ENCODE measurements at regions of chr19 and their contacts with region 1.

Region 1: GRCh38 chr19:47713046-47714021 is at the start of gene EHD2:
- DNase-seq: peak; percentile 80
- ATAC-seq: peak; percentile 94 to 96
- total RNA-seq, gene EHD2: 91.1 to 98.8 TPM

Region 2: GRCh38 chr19:47742634-47743033 is 29.3 kb after region 1 on chr19:
- intact Hi-C with region 1: loop called in 1 of 2 experiments (anchors 1 kb)
- DNase-seq: no peak
- ATAC-seq: peak in 1 of 2 donors; percentile 0

Measured in left cardiac atrium (tissue), 4 donors.